CD4-positive, alpha-beta memory T cell (primary cell): ENCODE measurements at regions of chr1 and their contacts with region 1.

Region 1: DNA sequence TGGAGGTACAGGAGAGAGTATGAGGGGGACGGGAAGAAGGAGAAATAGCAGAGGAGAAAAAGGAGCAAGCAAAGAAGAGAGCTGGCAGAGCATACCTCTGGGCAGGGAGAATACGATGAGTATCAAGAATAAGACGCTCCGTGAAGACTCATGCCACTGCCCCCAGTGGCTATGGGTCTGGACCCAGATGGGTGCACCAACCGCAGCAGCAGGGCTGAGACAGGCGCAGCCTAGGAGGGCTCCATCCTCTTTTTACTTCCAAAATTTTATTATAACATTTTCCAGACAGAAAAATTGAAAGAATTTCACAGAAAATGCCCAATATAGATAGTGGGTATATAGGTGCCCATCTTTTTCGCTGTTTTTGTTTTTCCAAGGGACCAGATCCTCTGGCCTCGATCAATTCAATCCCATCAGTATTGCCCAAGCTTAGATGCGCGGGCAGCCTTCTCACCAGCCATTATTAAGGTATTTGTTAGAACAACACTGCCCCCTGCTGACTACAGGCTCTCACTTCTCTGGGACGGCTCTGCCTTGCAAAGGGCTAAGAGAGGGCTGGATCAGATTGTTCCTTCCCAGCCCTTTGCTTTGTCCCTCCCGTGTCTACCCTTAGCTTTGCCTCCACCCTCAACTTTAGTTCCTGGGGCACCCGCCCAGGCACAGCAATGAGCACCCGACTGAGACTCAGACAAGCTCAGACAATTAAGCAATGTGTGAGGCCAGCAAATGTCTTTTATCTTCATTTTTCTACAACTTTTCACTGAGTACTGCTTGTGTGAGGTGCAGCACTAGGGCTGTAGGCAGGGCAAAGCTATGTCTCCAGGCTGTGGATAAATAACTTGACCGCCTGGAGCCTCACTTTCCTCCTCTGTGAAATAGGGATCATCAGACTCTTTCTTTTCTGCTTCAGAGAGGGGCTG is 17.5 kb upstream of the CAMK1G start:
- DNase-seq: peak; percentile 64 to 78 (median 67)
- H3K4me3 ChIP-seq: no peak overlapping the region
- H3K4me3 Mint-ChIP-seq: no peak overlapping the region
- H3K27ac ChIP-seq: no peak overlapping the region
- H3K27ac Mint-ChIP-seq: peak overlapping the region in 1 of 7 donors; percentile 45
- H3K4me1 ChIP-seq: peaks cover 6% of the 10 kb centered on the region
- H3K4me1 Mint-ChIP-seq: peaks cover 6 to 7% (median 6%) of the 10 kb centered on the region in 4 donors
- H3K27me3 ChIP-seq: peaks cover 9% of the 10 kb centered on the region
- H3K27me3 Mint-ChIP-seq: peaks cover 17 to 40% of the 10 kb centered on the region in 2 donors

Region 2: DNA sequence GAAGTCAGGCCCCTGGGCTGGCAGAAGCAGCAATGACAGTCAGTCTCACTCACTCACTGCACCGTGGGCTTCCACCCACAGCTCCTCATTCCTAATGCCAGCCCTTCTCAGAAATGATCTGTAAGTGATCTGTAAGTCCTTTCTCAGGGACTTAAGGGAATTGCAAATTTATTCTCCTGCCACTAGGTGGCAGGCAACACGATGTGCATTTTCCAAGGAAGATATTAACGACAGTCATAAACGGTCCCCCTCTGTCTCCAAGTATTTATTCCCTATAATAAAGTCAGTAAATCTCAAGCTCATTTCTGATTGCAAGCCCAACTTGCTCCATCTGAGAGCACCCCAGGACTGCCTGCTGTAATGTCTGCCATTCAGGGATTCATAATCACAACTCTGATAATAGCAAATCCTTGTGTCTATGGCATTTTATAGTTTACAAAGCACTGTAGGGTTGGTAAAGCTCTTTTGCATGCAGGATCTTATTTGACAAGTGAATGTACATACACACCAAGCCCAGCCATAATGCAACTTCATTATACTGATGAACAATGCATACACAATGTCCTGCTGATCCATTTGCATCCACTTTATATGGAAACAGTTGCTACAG is 363.1 kb before region 1 on chr1:
- CTCF ChIA-PET with region 1: interaction called, 13 read pairs
- POLR2A ChIA-PET with region 1: no interaction called
- intact Hi-C with region 1: no loop called
- DNase-seq: peak in 2 of 5 donors; percentile 4
- H3K4me3 ChIP-seq: no peak overlapping the region
- H3K4me3 Mint-ChIP-seq: no peak overlapping the region
- H3K27ac ChIP-seq: no peak overlapping the region
- H3K27ac Mint-ChIP-seq: no peak overlapping the region
- H3K4me1 ChIP-seq: no peaks in the 10 kb centered on the region
- H3K4me1 Mint-ChIP-seq: peaks cover 0 to 4% (median 2%) of the 10 kb centered on the region in 4 donors
- H3K27me3 ChIP-seq: no peaks in the 10 kb centered on the region
- H3K27me3 Mint-ChIP-seq: peaks cover 13 to 35% of the 10 kb centered on the region in 2 donors

Region 3: GRCh38 chr1:209411491-209411929 is 154.5 kb before region 1 on chr1:
- CTCF ChIA-PET with region 1: no interaction called
- POLR2A ChIA-PET with region 1: no interaction called
- intact Hi-C with region 1: no loop called
- DNase-seq: no peak
- H3K4me3 ChIP-seq: no peak overlapping the region
- H3K4me3 Mint-ChIP-seq: peak overlapping the region in 1 of 8 donors; percentile 10
- H3K27ac ChIP-seq: no peak overlapping the region
- H3K27ac Mint-ChIP-seq: no peak overlapping the region
- H3K4me1 ChIP-seq: no peaks in the 10 kb centered on the region
- H3K4me1 Mint-ChIP-seq: no peaks in the 10 kb centered on the region
- H3K27me3 ChIP-seq: no peaks in the 10 kb centered on the region
- H3K27me3 Mint-ChIP-seq: peaks cover 16 to 24% of the 10 kb centered on the region in 2 donors

Region 4: GRCh38 chr1:209576798-209577197 is 10.8 kb after region 1 on chr1:
- CTCF ChIA-PET with region 1: interaction called, 65 read pairs
- POLR2A ChIA-PET with region 1: no interaction called
- intact Hi-C with region 1: no loop called
- DNase-seq: peak in 4 of 5 donors; percentile 47 to 60 (median 50)
- H3K4me3 ChIP-seq: no peak overlapping the region
- H3K4me3 Mint-ChIP-seq: no peak overlapping the region
- H3K27ac ChIP-seq: no peak overlapping the region
- H3K27ac Mint-ChIP-seq: peak overlapping the region in 3 of 7 donors; percentile 24 to 61 (median 53)
- H3K4me1 ChIP-seq: no peaks in the 10 kb centered on the region
- H3K4me1 Mint-ChIP-seq: peaks cover 0 to 2% (median under 1%) of the 10 kb centered on the region in 4 donors
- H3K27me3 ChIP-seq: peaks cover 5% of the 10 kb centered on the region
- H3K27me3 Mint-ChIP-seq: peaks cover 2 to 6% of the 10 kb centered on the region in 2 donors

Region 5: GRCh38 chr1:209627732-209628196 is 61.7 kb after region 1 on chr1:
- CTCF ChIA-PET with region 1: interaction called, 5 read pairs
- POLR2A ChIA-PET with region 1: no interaction called
- intact Hi-C with region 1: loop called (anchors 1 kb)
- DNase-seq: peak; percentile 50 to 65 (median 61)
- H3K4me3 ChIP-seq: no peak overlapping the region
- H3K4me3 Mint-ChIP-seq: peak overlapping the region in 1 of 8 donors; percentile 23
- H3K27ac ChIP-seq: no peak overlapping the region
- H3K27ac Mint-ChIP-seq: no peak overlapping the region
- H3K4me1 ChIP-seq: peaks cover 4% of the 10 kb centered on the region
- H3K4me1 Mint-ChIP-seq: peaks cover 2 to 18% (median 6%) of the 10 kb centered on the region in 4 donors
- H3K27me3 ChIP-seq: no peaks in the 10 kb centered on the region
- H3K27me3 Mint-ChIP-seq: no peaks in the 10 kb centered on the region

Region 6: DNA sequence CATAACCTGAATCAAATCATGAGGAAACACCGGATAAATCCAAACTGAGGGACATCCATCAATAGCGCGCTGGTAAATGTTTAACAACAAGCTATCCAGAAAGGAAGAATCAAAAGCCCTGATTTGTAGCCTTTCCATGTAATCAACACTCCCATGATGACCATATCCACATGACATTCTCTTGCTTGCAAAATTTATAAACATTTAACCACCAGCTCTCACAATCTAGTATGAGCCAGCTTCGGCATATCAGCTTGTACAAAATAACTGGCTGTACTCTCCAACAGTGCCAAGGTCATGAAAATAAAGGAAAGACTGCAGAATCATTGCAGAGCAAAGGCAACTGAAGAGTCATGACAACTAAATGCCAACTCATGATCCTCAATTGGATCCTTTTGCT is 154.3 kb after region 1 on chr1:
- CTCF ChIA-PET with region 1: no interaction called
- POLR2A ChIA-PET with region 1: no interaction called
- intact Hi-C with region 1: no loop called
- DNase-seq: no peak
- H3K4me3 ChIP-seq: no peak overlapping the region
- H3K4me3 Mint-ChIP-seq: no peak overlapping the region
- H3K27ac ChIP-seq: no peak overlapping the region
- H3K27ac Mint-ChIP-seq: no peak overlapping the region
- H3K4me1 ChIP-seq: peaks cover 25% of the 10 kb centered on the region
- H3K4me1 Mint-ChIP-seq: peaks cover 14 to 18% (median 15%) of the 10 kb centered on the region in 4 donors
- H3K27me3 ChIP-seq: no peaks in the 10 kb centered on the region
- H3K27me3 Mint-ChIP-seq: no peaks in the 10 kb centered on the region

Region 7: DNA sequence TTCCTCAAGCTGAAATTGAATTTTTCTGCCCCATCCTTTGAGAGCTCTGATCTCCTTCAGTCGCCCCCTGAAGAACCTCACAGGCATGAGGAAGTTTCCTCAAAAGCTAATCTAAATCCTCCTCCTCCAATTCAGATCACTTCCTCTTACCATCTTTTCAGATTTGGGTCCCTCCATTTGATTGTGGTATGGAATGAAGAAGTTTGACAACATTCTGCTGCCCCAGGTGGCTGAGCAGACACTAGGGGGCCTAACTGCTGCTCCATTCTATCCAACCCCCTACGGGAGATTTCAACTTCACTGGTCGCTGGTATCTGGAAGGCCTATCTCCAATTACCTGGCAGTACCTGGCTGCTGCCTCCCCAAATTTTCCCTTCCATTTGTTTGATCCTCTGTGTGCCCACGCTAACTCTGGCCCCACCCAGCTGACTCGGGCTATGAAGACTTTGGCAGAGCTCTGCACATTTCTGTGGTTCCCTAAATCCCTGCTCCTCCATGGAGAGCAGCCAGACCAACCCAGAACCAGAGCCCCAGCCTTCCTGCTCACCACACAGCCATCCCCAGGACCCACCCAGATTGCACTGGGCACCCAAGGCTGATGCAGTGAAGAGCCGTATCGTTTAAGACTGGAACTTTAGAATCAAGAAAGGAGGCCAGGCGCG is 232.1 kb after region 1 on chr1:
- CTCF ChIA-PET with region 1: no interaction called
- POLR2A ChIA-PET with region 1: no interaction called
- intact Hi-C with region 1: no loop called
- DNase-seq: no peak
- H3K4me3 ChIP-seq: no peak overlapping the region
- H3K4me3 Mint-ChIP-seq: no peak overlapping the region
- H3K27ac ChIP-seq: no peak overlapping the region
- H3K27ac Mint-ChIP-seq: peak overlapping the region in 1 of 7 donors; percentile 31
- H3K4me1 ChIP-seq: no peaks in the 10 kb centered on the region
- H3K4me1 Mint-ChIP-seq: no peaks in the 10 kb centered on the region
- H3K27me3 ChIP-seq: no peaks in the 10 kb centered on the region
- H3K27me3 Mint-ChIP-seq: peaks cover 0 to 27% of the 10 kb centered on the region in 2 donors

Region 8: GRCh38 chr1:210311726-210312493 is 745.9 kb after region 1 on chr1:
- CTCF ChIA-PET with region 1: no interaction called
- POLR2A ChIA-PET with region 1: no interaction called
- intact Hi-C with region 1: loop called (anchors 5 kb)
- DNase-seq: no peak
- H3K4me3 ChIP-seq: no peak overlapping the region
- H3K4me3 Mint-ChIP-seq: peak overlapping the region; percentile 73 to 95 (median 92)
- H3K27ac ChIP-seq: no peak overlapping the region
- H3K27ac Mint-ChIP-seq: peak overlapping the region in 5 of 7 donors; percentile 42 to 95 (median 85)
- H3K4me1 ChIP-seq: peaks cover 4% of the 10 kb centered on the region
- H3K4me1 Mint-ChIP-seq: peaks cover 5 to 8% (median 6%) of the 10 kb centered on the region in 4 donors
- H3K27me3 ChIP-seq: no peaks in the 10 kb centered on the region
- H3K27me3 Mint-ChIP-seq: peaks cover 10 to 12% of the 10 kb centered on the region in 2 donors